ENCODE measurements at regions of chr5 and their contacts with region 1.

Region 1: DNA sequence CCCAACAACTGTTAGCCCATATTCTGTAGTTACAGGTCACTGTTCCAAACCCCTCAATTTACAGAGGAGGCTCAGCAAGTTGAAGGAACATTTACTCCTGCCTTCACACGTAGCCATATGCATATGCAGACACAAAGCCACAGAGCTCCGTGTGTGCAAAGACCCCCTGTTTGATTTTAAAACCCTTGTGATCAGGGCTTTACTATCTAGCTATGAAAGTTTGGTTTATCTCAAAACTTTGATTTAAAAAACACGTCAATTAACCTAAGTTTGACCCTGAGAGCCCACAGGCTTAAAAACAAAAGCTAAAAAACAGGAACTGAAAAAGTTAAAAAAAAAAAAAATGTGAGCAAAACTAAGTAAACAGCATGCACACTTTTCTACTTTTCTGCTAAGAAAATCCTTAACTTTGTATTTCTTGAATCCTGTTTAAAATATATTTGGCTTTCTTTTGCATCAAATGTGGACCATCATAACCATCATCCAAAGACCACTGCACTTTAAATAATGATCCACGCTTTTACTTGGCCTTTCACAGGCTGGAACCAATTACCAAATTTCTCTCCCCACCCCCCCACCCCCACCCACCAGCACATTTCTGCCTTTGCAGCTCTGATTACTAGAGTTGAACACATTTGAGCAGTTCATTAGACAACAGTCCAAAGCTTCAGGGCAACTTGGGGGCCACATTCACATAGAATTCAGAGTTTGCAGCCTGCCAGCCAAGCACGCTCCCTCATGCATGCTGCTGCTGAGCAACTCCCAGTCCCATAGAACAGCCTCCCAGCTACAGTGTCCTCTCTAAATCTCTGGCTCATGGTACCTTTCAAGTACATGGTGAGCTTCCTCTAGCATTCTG is 128.8 kb upstream of the MAP3K1 start:
- DNase-seq: peak; percentile 90
- H3K4me3 ChIP-seq: peak overlapping the region; percentile 31
- H3K27ac ChIP-seq: peak overlapping the region; percentile 93
- H3K4me1 ChIP-seq: peaks cover 87% of the 10 kb centered on the region
- CTCF ChIP-seq: no peak

Region 2: GRCh38 chr5:56211298-56211865 is 475.2 kb before region 1 on chr5:
- CTCF ChIA-PET with region 1: no interaction called
- POLR2A ChIA-PET with region 1: no interaction called
- intact Hi-C with region 1: no loop called
- DNase-seq: no peak
- H3K4me3 ChIP-seq: no peak overlapping the region
- H3K27ac ChIP-seq: no peak overlapping the region
- H3K4me1 ChIP-seq: no peaks in the 10 kb centered on the region
- CTCF ChIP-seq: no peak

Region 3: GRCh38 chr5:56588636-56589480 is 97.7 kb before region 1 on chr5:
- CTCF ChIA-PET with region 1: no interaction called
- POLR2A ChIA-PET with region 1: interaction called, 8 read pairs
- intact Hi-C with region 1: loop called (anchors 2 kb)
- DNase-seq: peak; percentile 93
- H3K4me3 ChIP-seq: peak overlapping the region; percentile 6
- H3K27ac ChIP-seq: peak overlapping the region; percentile 36
- H3K4me1 ChIP-seq: peaks cover 32% of the 10 kb centered on the region
- CTCF ChIP-seq: no peak

Region 4: GRCh38 chr5:56676091-56676768 is 10.3 kb before region 1 on chr5:
- CTCF ChIA-PET with region 1: interaction called, 4 read pairs
- POLR2A ChIA-PET with region 1: interaction called, 126 read pairs
- intact Hi-C with region 1: no loop called
- DNase-seq: no peak
- H3K4me3 ChIP-seq: no peak overlapping the region
- H3K27ac ChIP-seq: no peak overlapping the region
- H3K4me1 ChIP-seq: peaks cover 23% of the 10 kb centered on the region
- CTCF ChIP-seq: no peak

Region 5: GRCh38 chr5:56737002-56737621 is 50.5 kb after region 1 on chr5:
- CTCF ChIA-PET with region 1: interaction called, 3 read pairs
- POLR2A ChIA-PET with region 1: interaction called, 12 read pairs
- intact Hi-C with region 1: loop called (anchors 2 kb)
- DNase-seq: peak; percentile 46
- H3K4me3 ChIP-seq: peak overlapping the region; percentile 31
- H3K27ac ChIP-seq: peak overlapping the region; percentile 86
- H3K4me1 ChIP-seq: peaks cover 57% of the 10 kb centered on the region
- CTCF ChIP-seq: no peak

Region 6: DNA sequence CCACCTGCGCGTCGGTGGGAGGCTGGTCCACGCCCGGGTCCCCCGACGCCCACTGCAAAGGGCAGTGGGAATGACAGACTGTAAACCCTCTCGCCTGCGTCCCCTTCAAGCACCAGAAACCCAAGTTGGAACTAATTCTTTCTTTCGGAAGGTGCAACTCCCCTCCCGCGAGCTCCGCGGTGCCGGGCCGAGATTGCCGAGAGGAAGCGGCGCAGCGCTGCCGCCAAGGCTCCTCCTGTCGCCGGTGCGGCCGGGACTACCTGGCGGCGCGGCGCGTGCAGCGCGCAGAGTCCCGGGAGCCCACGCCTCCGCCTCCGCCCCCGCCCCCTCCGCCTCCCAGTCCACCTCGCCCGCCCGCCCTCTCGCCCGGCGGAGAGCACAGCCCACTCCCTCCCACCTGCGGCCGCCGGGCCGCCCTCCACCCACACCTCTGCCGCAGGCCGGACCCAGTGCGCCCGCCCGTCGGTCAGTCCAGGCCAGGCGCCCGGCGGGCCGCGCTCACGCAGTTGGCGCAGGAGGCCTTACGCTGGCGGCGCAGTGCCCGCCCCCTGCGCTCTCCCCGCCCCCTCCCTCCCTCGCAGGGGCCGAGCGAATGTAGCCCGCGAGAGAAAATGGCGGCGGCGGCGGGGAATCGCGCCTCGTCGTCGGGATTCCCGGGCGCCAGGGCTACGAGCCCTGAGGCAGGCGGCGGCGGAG is 128.5 kb after region 1 on chr5 and contains the start of gene MAP3K1:
- CTCF ChIA-PET with region 1: no interaction called
- POLR2A ChIA-PET with region 1: interaction called, 14 read pairs
- intact Hi-C with region 1: loop called (anchors 2 kb)
- DNase-seq: peak; percentile 88
- H3K4me3 ChIP-seq: peak within 1 kb of the TSS; percentile 95
- H3K27ac ChIP-seq: peak within 1 kb of the TSS; percentile 74
- H3K4me1 ChIP-seq: peaks cover 52% of the 10 kb centered on the region
- CTCF ChIP-seq: peak; percentile 64
- total RNA-seq, gene MAP3K1: 25.9 and 29.9 TPM in 2 replicates

Region 7: DNA sequence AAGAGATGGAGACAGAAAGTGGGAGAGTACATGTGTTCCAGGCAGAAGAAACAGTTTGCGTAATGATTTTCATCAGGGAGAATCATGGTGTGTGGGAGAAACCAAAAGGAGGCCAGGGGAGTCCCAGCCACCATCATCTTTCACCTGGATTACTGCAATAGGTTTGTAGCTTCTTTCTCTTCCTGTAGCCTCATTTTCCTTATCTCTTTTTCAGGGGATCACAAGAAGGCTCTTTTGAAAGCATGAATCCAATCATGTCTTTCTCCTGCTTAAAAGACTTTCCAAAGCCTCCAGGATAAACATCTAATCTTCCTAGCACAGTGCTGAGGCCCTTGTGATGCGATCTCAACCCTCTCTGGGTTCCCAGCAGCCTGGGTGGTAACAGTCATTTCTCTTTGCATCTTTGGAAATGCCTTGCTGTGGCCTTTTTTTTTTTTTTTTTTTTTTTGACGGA is 477.0 kb after region 1 on chr5:
- CTCF ChIA-PET with region 1: no interaction called
- POLR2A ChIA-PET with region 1: no interaction called
- intact Hi-C with region 1: no loop called
- DNase-seq: no peak
- H3K4me3 ChIP-seq: no peak overlapping the region
- H3K27ac ChIP-seq: no peak overlapping the region
- H3K4me1 ChIP-seq: peaks cover 5% of the 10 kb centered on the region
- CTCF ChIP-seq: no peak

Measured in OCI-LY7 (cell line).